HEK293 (cell line): ENCODE measurements at regions of chr17 and their contacts with region 1.

Region 1: DNA sequence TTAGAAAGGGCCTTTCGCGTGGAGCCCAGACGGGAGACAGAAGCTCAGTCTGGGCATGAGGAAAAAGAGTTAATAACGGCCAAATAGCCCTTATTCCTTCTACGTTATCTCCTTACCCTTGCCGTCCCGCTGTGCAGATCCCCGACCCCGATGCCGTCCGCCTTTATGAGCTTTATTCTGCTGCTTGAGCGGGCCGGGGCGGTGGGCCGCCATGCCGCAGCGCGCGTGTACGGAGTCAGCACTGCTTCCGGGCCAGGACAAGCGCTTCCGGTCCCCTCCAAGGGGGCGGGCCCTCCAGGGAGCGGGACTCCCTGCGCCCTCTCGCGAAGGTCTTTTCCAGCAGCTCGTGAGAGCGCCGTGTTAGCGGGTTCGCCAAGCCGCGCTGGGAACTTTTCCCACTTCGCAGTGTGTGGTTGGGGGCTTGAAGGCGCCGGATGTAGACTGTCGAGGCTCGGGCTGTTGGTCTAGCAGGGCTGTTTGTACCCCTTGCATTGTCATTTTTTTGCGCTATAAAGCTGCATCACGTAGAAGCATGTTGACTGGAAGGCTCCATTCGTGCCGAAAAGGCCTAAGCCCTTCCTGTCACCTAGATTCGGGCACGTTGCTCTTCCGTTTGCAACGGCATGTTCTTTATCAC is at the start of gene TSR1:
- H3K4me3 ChIP-seq: peak within 1 kb of the TSS; percentile 56
- H3K27ac ChIP-seq: peak within 1 kb of the TSS; percentile 88
- H3K4me1 ChIP-seq: peaks cover 14% of the 10 kb centered on the region
- CTCF ChIP-seq: peak; percentile 77

Region 2: DNA sequence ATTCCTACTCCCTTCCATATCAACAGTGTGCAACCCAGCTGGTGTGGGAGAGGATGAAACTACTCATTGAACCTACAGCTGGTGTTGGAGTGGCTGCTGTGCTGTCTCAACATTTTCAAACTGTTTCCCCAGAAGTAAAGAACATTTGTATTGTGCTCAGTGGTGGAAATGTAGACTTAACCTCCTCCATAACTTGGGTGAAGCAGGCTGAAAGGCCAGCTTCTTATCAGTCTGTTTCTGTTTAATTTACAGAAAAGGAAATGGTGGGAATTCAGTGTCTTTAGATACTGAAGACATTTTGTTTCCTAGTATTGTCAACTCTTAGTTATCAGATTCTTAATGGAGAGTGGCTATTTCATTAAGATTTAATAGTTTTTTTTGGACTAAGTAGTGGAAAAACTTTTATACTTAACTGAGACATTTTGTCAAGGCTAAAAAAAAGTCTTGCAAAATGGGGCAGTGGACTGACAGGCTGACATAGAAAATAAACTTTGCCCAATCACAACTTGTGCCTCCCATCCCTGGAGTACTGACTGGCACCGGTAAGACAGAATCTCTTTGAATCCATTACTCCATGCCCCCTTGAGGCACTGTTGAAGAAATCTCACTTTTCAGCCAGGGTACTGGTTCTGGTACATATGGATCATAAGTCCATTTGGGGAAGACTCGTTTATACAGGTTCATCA is 12.6 kb before region 1 on chr17:
- CTCF ChIA-PET with region 1: interaction called, 4 read pairs
- POLR2A ChIA-PET with region 1: interaction called, 17 read pairs
- H3K4me3 ChIP-seq: no peak overlapping the region
- H3K27ac ChIP-seq: no peak overlapping the region
- H3K4me1 ChIP-seq: no peaks in the 10 kb centered on the region
- CTCF ChIP-seq: no peak

Region 3: GRCh38 chr17:2347547-2348307 is 11.4 kb after region 1 on chr17:
- CTCF ChIA-PET with region 1: interaction called, 110 read pairs
- POLR2A ChIA-PET with region 1: interaction called, 49 read pairs
- H3K4me3 ChIP-seq: no peak overlapping the region
- H3K27ac ChIP-seq: peak overlapping the region; percentile 48; the same call in 1 of the 2 replicates
- H3K4me1 ChIP-seq: peaks cover 12% of the 10 kb centered on the region
- CTCF ChIP-seq: no peak

Region 4: GRCh38 chr17:2354311-2354710 is 18.0 kb after region 1 on chr17:
- CTCF ChIA-PET with region 1: interaction called, 110 read pairs
- POLR2A ChIA-PET with region 1: interaction called, 30 read pairs
- H3K4me3 ChIP-seq: no peak overlapping the region
- H3K27ac ChIP-seq: no peak overlapping the region
- H3K4me1 ChIP-seq: peaks cover 4% of the 10 kb centered on the region; the same call in 1 of the 2 replicates
- CTCF ChIP-seq: no peak

Region 5: GRCh38 chr17:2453325-2453724 is 117.0 kb after region 1 on chr17:
- CTCF ChIA-PET with region 1: no interaction called
- POLR2A ChIA-PET with region 1: no interaction called
- H3K4me3 ChIP-seq: no peak overlapping the region
- H3K27ac ChIP-seq: no peak overlapping the region
- H3K4me1 ChIP-seq: no peaks in the 10 kb centered on the region
- CTCF ChIP-seq: no peak

Region 6: GRCh38 chr17:2484876-2485275 is 148.5 kb after region 1 on chr17:
- CTCF ChIA-PET with region 1: no interaction called
- POLR2A ChIA-PET with region 1: no interaction called
- H3K4me3 ChIP-seq: no peak overlapping the region
- H3K27ac ChIP-seq: peak overlapping the region; percentile 64
- H3K4me1 ChIP-seq: peaks cover 35% of the 10 kb centered on the region
- CTCF ChIP-seq: no peak